ENCODE measurements at regions of chr21 and their contacts with region 1.

Region 1: DNA sequence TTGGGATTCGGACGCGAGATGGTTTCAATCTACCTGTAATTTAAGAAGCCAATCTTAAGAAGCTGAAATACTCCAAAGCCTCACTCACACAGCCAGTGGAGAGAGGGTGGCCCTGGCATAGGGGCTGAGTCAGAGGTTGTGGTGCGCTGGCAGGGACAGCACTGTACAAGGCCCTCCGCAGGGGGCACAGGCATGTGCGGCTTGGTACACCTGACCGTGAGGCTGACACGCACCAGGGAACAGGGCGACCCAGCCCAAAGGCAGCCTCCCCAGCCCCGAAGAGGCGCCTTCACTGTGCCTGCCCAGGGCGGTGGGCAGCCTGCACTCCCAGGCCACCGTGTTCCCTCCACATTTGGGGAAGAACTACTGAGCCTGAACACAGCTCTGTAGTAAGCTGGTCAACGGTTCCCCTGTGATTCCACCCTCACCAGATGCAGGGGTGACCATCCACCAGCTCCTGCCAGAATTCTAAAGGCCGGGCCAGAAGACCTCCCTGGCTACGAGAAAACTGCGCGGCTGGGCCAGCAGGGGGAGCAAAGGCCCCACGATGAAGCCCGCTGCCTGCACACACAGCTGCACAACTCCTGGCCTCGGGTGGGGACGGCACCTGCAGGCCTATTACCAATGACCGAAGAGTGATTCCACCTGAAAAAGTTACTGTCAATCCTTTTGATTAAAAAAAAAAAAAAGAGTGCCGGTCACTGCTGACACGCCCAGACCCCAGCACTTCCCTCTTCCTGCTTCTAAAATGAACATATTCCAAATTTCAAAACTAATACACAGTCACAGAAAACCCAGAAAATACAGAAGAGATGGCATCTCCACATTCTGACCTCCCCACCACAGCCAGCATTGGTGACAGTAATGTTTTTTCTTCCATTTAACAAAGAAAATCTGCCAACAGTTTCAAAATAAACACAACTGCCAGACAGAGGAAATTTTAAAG is 49.6 kb upstream of the RIPK4 start:
- DNase-seq: peak; percentile 48 to 63
- ATAC-seq: peak; percentile 65 to 95 (median 82)
- H3K4me3 ChIP-seq: no peak overlapping the region
- H3K27ac ChIP-seq: no peak overlapping the region
- H3K4me1 ChIP-seq: peaks cover 0 to 9% (median 4%) of the 10 kb centered on the region in 9 donors
- H3K27me3 ChIP-seq: no peaks in the 10 kb centered on the region
- CTCF ChIP-seq: peak; percentile 62 to 85 (median 83)

Region 2: DNA sequence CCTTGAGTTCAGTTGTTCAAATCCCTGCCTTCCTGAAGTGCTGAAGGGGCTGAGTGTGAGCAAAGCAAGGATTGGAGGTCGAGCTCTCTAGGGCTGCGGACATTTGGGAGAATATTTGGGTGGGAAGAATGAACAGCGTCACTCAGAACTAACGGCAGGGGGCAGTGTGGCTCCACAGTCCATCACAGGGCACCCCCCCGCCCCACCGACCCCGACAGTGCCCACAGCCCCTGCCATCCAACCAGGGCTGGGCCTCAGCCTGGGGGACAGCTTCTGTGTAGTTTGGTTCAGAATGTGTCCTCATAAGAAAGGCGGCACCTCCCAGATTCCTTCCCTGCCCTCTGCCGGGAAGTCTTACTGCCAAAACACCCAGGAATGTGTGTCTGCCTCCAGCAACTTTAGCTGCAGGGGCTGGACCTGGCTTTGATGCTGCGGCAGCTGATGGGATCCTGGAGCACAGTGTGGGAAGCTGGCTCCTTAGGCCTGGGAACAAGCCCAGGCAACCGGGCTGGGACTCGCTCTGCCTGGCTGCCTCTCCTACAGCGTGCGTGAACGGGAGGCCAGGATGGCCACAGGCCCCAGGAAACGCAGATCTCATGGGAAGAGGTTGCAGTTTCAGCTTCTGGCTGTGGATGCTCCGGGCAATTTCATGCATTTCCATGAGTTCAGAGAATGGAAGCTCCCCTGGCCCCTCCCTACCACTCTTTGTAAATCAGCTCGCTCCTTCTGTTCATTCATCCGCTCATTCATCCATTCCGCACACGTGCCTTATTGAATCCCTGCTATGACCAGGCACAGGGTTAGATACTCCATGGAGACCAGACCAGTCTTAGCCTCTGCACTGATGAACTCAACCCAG is 203.6 kb before region 1 on chr21:
- intact Hi-C with region 1: loop called in 1 of 10 experiments (anchors 5 kb)
- DNase-seq: peak; percentile 63 to 70
- ATAC-seq: peak; percentile 84 to 92 (median 88)
- H3K4me3 ChIP-seq: no peak overlapping the region
- H3K27ac ChIP-seq: peak overlapping the region in 5 of 10 donors; percentile 9 to 51 (median 21)
- H3K4me1 ChIP-seq: peaks cover 0 to 35% (median 14%) of the 10 kb centered on the region in 9 donors
- H3K27me3 ChIP-seq: peaks cover 0 to 56% (median 32%) of the 10 kb centered on the region in 7 donors
- CTCF ChIP-seq: peak; percentile 43 to 83 (median 78)

Region 3: DNA sequence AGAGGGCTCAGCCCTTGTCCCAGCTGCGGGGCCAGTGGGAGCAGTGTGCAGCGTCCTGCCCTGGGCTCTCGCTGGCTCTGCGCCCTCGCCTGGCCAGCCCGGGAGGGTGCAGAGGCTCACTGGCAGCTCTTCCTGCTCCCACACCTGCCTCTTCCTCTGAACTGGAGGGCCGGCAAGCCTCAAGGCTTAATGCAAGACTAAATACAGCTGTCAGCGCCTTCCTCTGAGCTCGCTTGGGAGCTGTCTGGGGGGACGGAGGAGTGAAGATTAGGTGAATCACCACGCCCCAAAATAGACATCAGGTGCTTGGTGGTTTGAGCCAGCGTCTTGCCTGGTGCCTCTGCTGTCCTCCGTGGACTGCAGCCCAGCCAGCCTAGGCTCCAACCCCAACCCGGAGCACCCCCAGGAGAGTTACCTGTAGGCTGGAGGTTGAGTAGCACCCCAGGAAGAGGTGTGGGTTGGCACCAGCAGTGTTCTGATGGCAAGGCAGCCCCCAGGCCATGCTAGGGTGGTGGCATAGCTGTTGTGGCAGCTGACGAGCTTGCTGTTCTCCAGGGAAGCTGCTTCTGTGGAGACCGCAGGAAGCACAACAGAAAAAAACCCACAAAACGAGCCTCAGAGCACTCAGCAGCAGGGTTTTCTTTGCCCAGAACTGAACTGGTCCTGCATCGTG is 291.5 kb after region 1 on chr21:
- intact Hi-C with region 1: loop called in 1 of 10 experiments (anchors 2 kb)
- DNase-seq: peak; percentile 39 to 66
- ATAC-seq: peak; percentile 79 to 95 (median 91)
- H3K4me3 ChIP-seq: no peak overlapping the region
- H3K27ac ChIP-seq: no peak overlapping the region
- H3K4me1 ChIP-seq: peaks cover 0 to 15% (median 7%) of the 10 kb centered on the region in 9 donors
- H3K27me3 ChIP-seq: peaks cover 0 to 55% (median 7%) of the 10 kb centered on the region in 7 donors
- CTCF ChIP-seq: peak in 8 of 9 donors; percentile 52 to 82 (median 66)